ENCODE measurements at regions of chrX and their contacts with region 1.

Region 1: DNA sequence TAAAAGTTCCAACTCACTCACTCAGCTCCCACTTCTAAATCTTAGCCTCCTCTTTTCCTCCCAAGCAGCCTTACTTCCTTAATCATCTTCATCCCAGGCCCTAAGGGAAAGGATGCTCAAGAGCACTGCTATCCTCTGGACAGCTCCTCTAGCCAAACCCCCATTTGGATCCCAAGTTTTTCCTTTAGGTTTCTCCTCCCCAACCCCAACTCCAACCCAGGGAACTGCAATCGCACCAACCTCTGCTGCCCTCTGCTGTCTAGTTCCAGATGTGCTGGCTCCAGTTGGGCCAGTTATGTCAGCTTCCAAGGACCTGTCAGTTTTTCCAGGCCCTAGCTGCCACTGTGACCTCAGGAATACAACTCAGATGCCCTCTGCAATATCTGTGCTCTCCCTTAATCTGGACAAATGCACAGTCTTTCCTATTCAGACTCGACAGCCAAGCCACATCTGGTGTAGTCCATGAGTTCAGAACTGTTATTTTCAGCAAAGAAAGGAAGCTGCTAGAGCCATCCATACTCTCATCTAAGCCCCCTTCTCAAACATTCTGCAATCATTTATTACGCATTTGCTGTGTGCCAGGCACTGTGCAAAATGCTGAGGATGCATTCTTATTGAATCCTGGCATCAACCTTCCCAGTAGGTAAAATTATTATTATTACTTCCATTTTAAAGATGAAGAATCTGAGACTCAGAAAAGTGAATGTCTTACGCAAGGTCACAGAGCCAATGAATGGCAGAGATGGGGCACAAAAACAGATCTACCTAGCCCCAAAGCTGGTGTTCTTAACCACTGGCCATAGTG is 12.3 kb upstream of the XPNPEP2 start:
- DNase-seq: peak; percentile 41 to 88 (median 77)

Region 2: DNA sequence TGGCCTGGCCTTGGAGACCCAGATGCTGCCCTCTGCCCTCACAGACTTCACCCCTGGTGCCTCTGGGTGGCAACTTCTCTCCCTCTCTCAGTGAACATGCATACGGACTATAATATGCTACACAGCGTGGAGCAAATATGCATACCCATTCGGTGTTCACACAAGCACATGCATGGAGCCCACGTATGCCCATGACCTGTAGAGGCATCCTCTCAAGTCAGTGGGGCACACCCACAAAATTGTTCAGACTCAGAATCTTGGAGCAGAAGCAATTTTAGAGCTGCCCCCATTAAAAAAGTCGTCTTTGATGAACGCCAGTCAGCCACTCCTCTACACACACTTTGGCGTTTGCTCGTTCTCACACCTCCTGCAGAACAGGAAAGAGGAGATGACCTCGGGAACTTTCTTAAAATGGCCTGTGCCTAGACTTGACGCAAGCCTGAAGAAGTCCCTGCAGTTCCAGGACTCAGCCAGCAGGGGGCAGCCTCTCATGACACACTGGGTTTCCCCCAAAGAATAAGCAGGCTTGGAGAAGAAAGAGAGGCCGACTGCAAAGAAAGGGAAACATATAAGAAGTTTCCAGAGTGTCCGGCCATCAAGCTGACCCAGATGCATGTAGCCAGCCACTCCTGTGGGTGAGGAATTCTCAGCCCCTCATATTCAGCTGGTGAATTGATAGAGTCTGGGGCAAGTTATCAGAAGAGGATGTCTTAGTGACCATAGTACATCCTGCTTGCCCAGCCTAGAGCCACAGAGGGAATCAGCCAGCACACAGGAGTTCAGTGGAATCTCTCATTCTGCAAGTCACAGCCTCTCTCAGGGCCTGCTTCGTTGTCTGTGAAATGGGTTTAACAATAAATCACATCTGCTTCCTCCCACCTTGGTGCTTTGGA is 89.0 kb before region 1 on chrX:
- intact Hi-C with region 1: loop called (anchors 1 kb)
- DNase-seq: peak; percentile 31 to 93 (median 83)